Ovary (tissue), 10 donors: ENCODE measurements at regions of chr6 and their contacts with region 1.

Region 1: DNA sequence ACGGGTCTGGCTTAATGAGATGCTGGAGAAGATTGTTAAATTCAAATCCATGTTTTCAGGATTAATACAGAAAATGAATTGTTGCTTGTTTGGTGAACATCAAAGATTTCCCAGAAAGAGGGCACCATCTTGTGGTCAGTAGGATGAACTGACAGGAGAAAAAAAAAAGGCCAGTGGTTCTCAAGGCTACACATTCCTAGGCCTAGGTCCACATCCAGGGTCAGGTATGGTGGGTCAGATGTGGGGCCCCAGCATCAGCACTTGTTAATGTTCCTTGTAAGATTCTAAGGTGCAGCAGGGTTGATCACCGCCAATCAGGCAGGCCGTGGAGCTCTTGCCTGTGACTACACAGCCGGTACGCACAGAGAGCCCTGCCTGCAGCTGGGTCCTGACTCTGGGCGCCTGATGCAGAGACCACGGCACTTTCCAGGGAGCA is 34.0 kb upstream of the FOXO3 start:
- DNase-seq: no peak
- H3K4me3 ChIP-seq: no peak overlapping the region
- H3K27ac ChIP-seq: no peak overlapping the region
- H3K4me1 ChIP-seq: no peaks in the 10 kb centered on the region
- H3K27me3 ChIP-seq: no peaks in the 10 kb centered on the region
- CTCF ChIP-seq: peak; percentile 44 to 77 (median 57)
- EP300 ChIP-seq: no peak
- POLR2A ChIP-seq: no peak

Region 2: DNA sequence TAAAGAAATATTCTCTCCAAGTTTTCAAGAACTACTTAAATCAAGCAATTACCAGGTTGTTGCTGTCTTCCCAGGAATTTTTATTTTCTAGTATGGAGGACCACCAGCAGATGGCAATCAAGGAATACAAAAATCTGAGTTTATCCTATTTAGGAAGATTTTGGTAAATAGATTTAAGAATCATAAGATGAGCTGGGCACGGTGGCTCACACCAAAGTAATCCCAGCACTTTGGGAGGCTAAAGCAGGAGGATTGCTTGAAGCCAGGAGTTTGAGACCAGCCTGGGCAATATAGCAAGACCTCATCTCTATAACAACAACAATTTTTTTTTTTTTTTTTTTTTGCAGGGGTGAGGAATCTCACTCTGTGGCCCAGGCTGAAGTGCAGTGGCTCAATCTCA is 549.5 kb before region 1 on chr6:
- intact Hi-C with region 1: loop called in 2 of 4 experiments (anchors 5 to 10 kb)
- DNase-seq: no peak
- H3K4me3 ChIP-seq: no peak overlapping the region
- H3K27ac ChIP-seq: no peak overlapping the region
- H3K4me1 ChIP-seq: no peaks in the 10 kb centered on the region
- H3K27me3 ChIP-seq: no peaks in the 10 kb centered on the region
- CTCF ChIP-seq: peak; percentile 20 to 59 (median 40)
- EP300 ChIP-seq: no peak
- POLR2A ChIP-seq: no peak

Region 3: GRCh38 chr6:107991061-107991460 is 535.7 kb before region 1 on chr6:
- intact Hi-C with region 1: loop called in 2 of 4 experiments (anchors 10 kb)
- DNase-seq: no peak
- H3K4me3 ChIP-seq: no peak overlapping the region
- H3K27ac ChIP-seq: no peak overlapping the region
- H3K4me1 ChIP-seq: no peaks in the 10 kb centered on the region
- H3K27me3 ChIP-seq: no peaks in the 10 kb centered on the region
- CTCF ChIP-seq: no peak
- EP300 ChIP-seq: no peak
- POLR2A ChIP-seq: no peak

Region 4: DNA sequence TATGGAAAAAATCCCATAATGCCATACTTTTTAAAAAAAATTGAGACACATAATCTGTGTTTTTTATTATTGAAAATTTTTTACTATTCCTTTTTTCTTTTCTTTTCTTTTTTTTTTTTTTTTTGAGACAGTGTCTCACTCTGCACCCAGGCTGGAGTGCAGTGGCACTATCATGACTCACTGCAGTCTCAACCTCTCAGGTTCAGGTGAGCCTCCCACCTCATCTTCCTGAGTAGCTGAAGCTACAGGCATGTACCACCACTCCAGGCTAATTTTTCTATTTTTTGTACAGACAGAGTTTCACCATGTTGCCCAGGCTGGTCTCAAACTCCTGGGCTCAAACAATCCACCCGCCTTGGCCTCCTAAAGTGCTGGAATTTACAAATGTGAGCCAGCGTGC is 131.5 kb before region 1 on chr6:
- intact Hi-C with region 1: no loop called
- DNase-seq: no peak
- H3K4me3 ChIP-seq: no peak overlapping the region
- H3K27ac ChIP-seq: no peak overlapping the region
- H3K4me1 ChIP-seq: no peaks in the 10 kb centered on the region
- H3K27me3 ChIP-seq: no peaks in the 10 kb centered on the region
- CTCF ChIP-seq: no peak
- EP300 ChIP-seq: no peak
- POLR2A ChIP-seq: no peak